ENCODE measurements at regions of chr19 and their contacts with region 1.

Region 1: GRCh38 chr19:21900372-21900771 is 64.4 kb upstream of the ZNF43 start:
- DNase-seq: no peak
- H3K4me3 Mint-ChIP-seq: no peak overlapping the region
- H3K27ac Mint-ChIP-seq: no peak overlapping the region
- H3K4me1 Mint-ChIP-seq: no peaks in the 10 kb centered on the region
- H3K27me3 Mint-ChIP-seq: peaks cover 3% of the 10 kb centered on the region

Region 2: DNA sequence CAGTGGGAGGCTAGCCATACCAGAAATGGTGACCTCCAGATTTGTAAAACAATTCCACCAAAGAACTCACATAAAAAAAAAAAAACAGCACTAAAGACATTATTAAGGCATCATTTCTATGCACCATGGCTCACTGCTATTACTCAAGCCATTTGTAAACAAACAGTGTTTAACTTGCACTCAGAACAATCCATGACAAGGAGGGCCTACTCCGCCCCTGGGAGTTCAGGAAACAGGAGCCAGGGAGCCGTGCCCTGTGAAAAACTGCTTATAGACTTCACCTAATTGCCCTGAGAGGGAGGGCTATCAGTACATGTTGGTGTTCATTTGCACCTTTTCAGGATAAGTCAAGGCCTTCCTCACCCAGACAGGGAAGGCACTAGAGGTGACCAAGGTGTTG is 291.8 kb before region 1 on chr19:
- CTCF ChIA-PET with region 1: no interaction called
- intact Hi-C with region 1: no loop called
- DNase-seq: no peak
- H3K4me3 Mint-ChIP-seq: no peak overlapping the region
- H3K27ac Mint-ChIP-seq: no peak overlapping the region
- H3K4me1 Mint-ChIP-seq: peaks cover 17% of the 10 kb centered on the region
- H3K27me3 Mint-ChIP-seq: no peaks in the 10 kb centered on the region

Region 3: GRCh38 chr19:21874151-21874550 is 26.2 kb before region 1 on chr19:
- CTCF ChIA-PET with region 1: no interaction called
- intact Hi-C with region 1: loop called (anchors 1 kb)
- DNase-seq: no peak
- H3K4me3 Mint-ChIP-seq: no peak overlapping the region
- H3K27ac Mint-ChIP-seq: no peak overlapping the region
- H3K4me1 Mint-ChIP-seq: no peaks in the 10 kb centered on the region
- H3K27me3 Mint-ChIP-seq: no peaks in the 10 kb centered on the region

Region 4: DNA sequence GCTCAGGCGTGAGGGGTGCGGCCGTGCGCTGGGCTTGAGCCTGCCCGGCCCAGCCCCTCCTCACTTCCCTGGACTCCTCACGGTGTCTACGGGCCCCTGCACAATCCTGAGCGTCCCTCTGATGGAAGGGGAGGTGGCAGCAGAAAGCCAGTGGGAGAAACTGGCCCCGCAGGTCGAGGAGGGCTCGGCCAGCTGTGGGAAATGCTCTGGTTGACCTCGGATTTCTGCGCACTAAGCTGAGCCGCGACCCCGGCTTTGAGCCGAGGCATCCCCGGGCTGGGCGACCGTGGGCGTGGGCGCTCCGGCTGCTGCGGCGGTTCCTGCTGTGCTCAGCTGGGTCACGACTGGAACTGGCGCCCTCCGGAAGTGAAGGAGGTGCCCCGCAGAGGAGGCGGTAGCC is 40.3 kb after region 1 on chr19:
- CTCF ChIA-PET with region 1: no interaction called
- intact Hi-C with region 1: no loop called
- DNase-seq: no peak
- H3K4me3 Mint-ChIP-seq: no peak overlapping the region
- H3K27ac Mint-ChIP-seq: no peak overlapping the region
- H3K4me1 Mint-ChIP-seq: no peaks in the 10 kb centered on the region
- H3K27me3 Mint-ChIP-seq: no peaks in the 10 kb centered on the region